Activated naive CD4-positive, alpha-beta T cell treated with anti-CD3 and anti-CD28 coated beads for 36 hours (primary cell): ENCODE measurements at regions of chr9 and their contacts with region 1.

Region 1: DNA sequence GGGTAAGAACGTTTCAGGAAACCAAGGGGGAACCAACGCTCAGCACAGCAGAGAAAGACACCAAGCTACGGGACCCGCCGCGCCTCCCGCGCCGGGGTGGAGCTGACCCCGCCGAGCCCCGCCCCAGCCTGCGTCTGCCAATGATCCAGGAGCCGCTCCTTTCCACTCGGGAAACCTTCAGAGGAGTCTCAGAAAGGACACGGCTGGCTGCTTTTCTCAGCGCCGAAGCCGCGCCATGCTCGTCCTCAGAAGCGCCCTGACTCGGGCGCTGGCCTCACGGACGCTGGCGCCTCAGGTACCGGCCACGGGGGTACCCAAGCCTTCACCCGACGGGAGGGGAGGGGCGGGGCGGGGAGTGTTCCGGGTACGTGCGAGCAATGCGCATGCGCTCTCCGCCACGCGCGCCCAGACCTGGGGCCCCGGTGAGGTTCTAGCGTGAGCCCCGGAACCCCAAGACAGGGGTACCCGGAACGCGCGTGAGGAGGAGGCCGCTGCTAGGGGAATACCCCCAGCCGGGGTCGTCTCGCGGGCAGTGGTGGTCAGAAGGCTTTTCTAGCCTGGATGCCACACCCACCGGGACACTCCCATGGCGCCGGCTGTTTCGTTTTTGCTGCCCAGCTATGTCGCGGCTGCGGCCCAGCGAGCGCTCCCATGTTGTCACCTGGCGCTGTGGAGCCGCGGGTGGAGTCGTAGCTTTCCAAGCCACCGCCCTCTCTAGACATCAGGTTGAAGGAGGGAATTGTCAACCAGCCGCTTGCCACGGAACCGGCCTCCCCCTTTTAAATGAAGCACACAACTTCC is at the start of gene NIPSNAP3A:
- DNase-seq: peak; percentile 89
- H3K4me3 Mint-ChIP-seq: peak within 1 kb of the TSS; percentile 99
- H3K27ac Mint-ChIP-seq: peak within 1 kb of the TSS; percentile 97
- H3K4me1 Mint-ChIP-seq: peaks cover 24% of the 10 kb centered on the region
- H3K27me3 Mint-ChIP-seq: no peaks in the 10 kb centered on the region
- total RNA-seq, gene NIPSNAP3A: 17.8 TPM

Region 2: DNA sequence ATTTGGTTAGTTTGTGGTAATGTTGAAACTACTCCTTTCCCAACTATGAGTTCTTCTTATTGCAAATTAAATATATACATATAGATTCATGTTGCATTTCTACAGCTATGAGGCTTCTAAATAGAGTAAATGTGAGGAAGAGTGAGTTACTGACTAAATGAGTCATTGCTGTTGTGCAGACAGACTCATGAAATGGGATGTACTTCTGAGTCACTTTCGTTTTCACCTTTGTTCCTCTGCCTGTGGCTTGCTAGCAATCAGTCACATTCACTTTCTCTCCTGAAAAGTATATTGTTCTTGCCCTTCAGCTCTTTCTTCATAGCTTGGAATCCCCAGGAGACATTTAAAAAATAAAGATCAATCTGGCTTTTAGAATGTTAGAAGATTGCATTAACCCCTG is 949.1 kb before region 1 on chr9:
- CTCF ChIA-PET with region 1: no interaction called
- intact Hi-C with region 1: loop called (anchors 2 kb)
- DNase-seq: peak; percentile 9
- H3K4me3 Mint-ChIP-seq: no peak overlapping the region
- H3K27ac Mint-ChIP-seq: no peak overlapping the region
- H3K4me1 Mint-ChIP-seq: peaks cover 6% of the 10 kb centered on the region
- H3K27me3 Mint-ChIP-seq: peaks cover 7% of the 10 kb centered on the region

Region 3: GRCh38 chr9:104177003-104177611 is 570.7 kb before region 1 on chr9:
- CTCF ChIA-PET with region 1: no interaction called
- intact Hi-C with region 1: loop called (anchors 1 kb)
- DNase-seq: no peak
- H3K4me3 Mint-ChIP-seq: no peak overlapping the region
- H3K27ac Mint-ChIP-seq: no peak overlapping the region
- H3K4me1 Mint-ChIP-seq: no peaks in the 10 kb centered on the region
- H3K27me3 Mint-ChIP-seq: peaks cover 4% of the 10 kb centered on the region

Region 4: GRCh38 chr9:104682642-104683041 is 65.1 kb before region 1 on chr9:
- CTCF ChIA-PET with region 1: no interaction called
- intact Hi-C with region 1: loop called (anchors 1 kb)
- DNase-seq: peak; percentile 4
- H3K4me3 Mint-ChIP-seq: no peak overlapping the region
- H3K27ac Mint-ChIP-seq: no peak overlapping the region
- H3K4me1 Mint-ChIP-seq: no peaks in the 10 kb centered on the region
- H3K27me3 Mint-ChIP-seq: no peaks in the 10 kb centered on the region

Region 5: GRCh38 chr9:105157130-105157583 is 409.4 kb after region 1 on chr9:
- CTCF ChIA-PET with region 1: no interaction called
- intact Hi-C with region 1: loop called (anchors 2 kb)
- DNase-seq: peak; percentile 46
- H3K4me3 Mint-ChIP-seq: no peak overlapping the region
- H3K27ac Mint-ChIP-seq: no peak overlapping the region
- H3K4me1 Mint-ChIP-seq: peaks cover 16% of the 10 kb centered on the region
- H3K27me3 Mint-ChIP-seq: no peaks in the 10 kb centered on the region

Region 6: DNA sequence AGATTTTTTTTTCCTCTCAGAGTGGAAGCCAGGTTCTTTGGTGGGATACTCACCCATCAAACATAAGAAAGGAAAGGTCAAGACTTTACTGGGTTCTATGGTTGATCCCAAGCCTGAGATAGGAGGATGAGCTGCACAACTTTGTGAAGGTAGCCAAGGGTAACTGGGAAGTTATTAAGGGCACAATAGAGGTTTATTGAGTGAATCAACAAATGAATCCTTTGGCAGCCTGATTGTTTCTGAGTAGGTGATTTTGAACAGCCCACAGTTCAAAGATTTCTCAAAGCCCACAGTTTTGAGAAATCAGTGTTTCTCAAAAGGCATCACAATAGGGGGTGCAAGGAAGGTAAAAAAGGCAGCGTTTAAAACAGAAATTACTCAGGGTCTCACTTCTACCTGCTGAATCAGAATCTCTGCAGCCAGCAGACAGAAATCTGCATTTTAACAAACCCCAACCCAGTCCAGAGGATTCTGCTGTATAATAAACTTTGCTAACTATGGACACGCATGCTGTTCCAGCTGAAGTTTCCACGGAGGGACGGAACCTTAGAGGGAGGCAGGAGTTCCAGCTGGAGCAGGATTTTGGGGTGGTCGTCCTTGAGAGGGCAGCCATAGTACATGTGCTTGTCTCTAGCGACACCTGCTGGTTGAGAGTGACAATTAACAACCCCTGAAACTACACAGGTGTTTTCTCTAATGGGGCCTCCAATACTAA is 667.3 kb after region 1 on chr9:
- CTCF ChIA-PET with region 1: no interaction called
- intact Hi-C with region 1: loop called (anchors 1 kb)
- DNase-seq: peak; percentile 72
- H3K4me3 Mint-ChIP-seq: no peak overlapping the region
- H3K27ac Mint-ChIP-seq: no peak overlapping the region
- H3K4me1 Mint-ChIP-seq: peaks cover 2% of the 10 kb centered on the region
- H3K27me3 Mint-ChIP-seq: peaks cover 27% of the 10 kb centered on the region